Dorsolateral prefrontal cortex (tissue), 120 donors: ENCODE measurements at regions of chr5 and their contacts with region 1.

Region 1: DNA sequence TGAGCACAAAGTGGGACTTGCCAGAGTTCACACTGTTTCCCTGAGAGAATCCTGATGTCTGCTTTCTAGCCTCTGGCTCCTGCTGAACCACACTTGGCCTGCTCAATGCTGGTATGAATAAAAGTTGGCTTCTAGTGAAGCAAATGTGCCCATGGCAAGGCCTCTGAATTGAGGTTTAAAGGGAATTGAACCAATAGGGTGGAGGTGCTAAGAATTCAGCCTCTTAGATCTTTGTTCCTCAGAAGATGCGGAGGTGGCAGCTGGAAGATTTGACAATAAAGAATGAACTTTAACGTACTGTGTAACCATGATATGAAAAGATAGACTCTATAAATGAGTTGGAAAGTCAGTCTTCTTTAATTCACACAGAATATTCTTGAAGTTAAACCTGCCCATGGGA is 57.2 kb downstream of the RASGRF2 start:
- DNase-seq: no peak
- H3K4me3 ChIP-seq: no peak overlapping the region
- H3K27ac ChIP-seq: peak overlapping the region in 24 of 59 donors; percentile 6 to 82 (median 58)
- H3K27me3 ChIP-seq: no peaks in the 10 kb centered on the region
- CTCF ChIP-seq: no peak

Region 2: DNA sequence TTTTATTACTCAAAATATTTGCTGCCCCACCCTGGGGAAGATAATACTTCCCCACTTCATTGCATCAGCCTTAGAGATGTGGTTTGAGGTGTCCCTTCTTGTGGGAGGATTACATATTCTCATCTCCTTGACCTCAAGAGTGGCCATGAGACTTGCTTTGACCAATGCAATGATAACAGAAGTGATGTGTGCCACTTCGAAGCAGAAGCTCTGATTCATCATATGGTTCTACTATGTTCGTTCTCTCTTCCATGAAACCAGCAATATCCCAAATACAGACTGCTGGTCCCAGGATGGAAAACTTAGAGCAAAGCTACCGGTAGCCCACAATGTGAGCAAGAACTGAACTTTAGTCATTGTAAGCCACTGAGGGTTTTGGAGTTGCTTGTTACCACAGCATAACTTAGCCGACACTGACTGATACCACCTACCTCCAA is 890.2 kb before region 1 on chr5:
- intact Hi-C with region 1: no loop called
- DNase-seq: no peak
- H3K4me3 ChIP-seq: no peak overlapping the region
- H3K27ac ChIP-seq: no peak overlapping the region
- H3K27me3 ChIP-seq: no peaks in the 10 kb centered on the region
- CTCF ChIP-seq: no peak

Region 3: DNA sequence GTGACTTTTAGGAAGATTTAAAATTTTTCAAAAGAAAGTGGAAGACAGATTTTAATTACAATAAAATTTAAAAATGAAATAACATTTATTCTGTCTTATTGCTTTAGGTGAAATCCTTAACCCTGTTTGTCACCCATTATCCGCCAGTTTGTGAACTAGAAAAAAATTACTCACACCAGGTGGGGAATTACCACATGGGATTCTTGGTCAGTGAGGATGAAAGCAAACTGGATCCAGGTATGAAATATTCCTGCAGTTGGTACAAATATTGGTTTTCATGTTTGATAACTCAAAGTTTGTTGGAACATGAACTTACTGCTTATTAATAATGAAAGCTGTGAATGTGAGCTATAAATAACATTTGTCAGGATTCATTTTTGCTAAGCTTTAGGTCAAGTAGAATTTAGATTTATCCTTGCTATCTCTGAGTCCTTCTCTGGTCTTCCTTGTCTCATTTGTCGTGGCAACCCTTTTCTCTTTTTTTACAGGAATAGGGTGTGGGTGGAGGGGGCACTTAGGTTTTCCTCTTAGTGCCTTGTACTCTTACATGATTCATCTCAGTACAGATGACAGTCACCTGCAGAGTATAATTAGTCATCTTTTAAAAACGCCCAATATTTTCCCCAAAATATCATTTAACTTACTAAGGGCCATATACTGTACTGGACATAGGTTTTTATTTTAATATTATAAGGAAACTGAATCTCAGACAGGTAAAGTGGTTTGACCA is 152.4 kb before region 1 on chr5:
- intact Hi-C with region 1: no loop called
- DNase-seq: no peak
- H3K4me3 ChIP-seq: no peak overlapping the region
- H3K27ac ChIP-seq: no peak overlapping the region
- H3K27me3 ChIP-seq: no peaks in the 10 kb centered on the region
- CTCF ChIP-seq: no peak

Region 4: DNA sequence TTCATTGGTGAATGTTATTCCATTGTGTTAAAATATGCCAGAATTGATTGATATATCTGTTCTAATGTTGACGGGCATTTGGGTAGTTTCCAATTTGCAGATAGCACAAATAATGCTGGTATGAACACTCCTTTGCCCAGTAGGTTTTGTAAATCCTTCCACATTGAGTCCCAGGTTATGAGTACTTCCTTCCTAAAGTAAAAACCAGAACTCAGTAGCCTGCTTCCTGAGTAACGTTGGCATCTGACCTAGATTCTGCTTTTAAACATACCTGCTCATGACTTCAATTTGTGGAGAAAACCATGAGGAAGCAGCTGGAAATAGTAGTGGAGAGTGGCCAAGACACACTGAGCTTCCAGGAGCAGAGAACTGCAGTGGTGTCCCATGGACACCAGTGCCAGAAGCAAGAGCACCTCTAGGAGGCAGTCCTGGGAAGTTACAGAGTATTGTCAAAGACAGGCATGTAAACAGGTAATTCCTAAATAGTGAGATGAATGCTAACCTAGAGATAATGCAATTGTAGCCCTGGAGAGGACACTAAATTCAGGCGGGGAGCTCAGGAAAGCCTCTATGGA is 81.4 kb before region 1 on chr5:
- intact Hi-C with region 1: no loop called
- DNase-seq: no peak
- H3K4me3 ChIP-seq: no peak overlapping the region
- H3K27ac ChIP-seq: no peak overlapping the region
- H3K27me3 ChIP-seq: no peaks in the 10 kb centered on the region
- CTCF ChIP-seq: no peak

Region 5: DNA sequence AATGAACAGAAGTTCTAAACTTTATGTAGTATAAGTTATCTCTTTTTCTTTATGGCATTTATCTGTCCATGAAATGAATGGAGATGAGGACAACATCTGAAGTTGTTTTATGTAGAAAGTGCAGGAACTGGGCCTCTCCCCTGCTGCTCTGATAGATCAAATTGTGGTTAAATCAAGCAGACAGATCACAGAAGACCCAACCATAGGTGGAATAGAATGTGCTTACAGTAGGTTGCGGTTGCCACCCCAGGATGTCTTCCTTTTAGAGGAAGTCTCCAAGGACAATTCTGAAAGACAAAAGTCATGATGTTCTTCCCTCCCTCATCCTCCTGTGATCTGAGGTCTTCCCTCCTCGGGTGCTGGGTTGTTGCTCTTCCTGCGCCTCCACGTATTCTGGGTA is 44.3 kb before region 1 on chr5:
- intact Hi-C with region 1: loop called in 1 of 2 experiments (anchors 5 kb)
- DNase-seq: no peak
- H3K4me3 ChIP-seq: no peak overlapping the region
- H3K27ac ChIP-seq: peak overlapping the region in 16 of 59 donors; percentile 18 to 84 (median 72)
- H3K27me3 ChIP-seq: no peaks in the 10 kb centered on the region
- CTCF ChIP-seq: no peak

Region 6: DNA sequence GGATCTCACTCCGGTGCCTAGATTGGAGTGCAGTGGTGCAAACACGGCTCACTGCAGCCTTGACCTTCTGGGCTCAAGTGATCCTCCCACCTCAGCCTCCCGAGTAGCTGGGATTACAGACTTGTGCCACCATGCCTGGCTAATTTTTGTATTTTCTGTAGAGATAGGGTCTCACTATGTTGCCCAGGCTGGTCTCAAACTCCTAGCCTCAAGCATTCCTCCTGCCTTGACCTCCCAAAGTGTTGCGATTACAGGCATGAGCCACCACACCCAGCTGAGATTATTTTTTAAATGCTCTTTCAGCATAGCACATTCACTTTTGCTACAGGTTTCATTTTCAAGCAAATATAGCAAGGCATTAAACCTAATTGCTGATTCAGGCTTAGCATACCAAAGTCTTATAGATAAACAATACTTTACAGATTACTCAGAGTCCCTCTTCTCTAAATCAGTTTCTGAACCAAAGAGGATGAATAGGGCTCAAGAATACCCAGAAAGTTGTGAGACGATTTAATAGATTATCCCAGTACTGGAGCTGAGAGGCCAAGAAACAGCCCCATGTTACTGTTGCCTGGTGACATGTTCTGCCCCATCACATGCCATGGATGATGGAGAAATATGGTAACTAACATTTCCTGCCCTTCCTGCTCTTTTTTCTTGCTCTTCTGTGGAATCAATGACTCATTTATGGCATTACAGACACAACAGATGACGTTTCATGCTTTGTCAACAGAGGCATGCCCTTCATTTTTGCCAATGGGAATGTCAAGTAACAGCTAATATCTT is 751.5 kb after region 1 on chr5:
- intact Hi-C with region 1: no loop called
- DNase-seq: no peak
- H3K4me3 ChIP-seq: no peak overlapping the region
- H3K27ac ChIP-seq: no peak overlapping the region
- H3K27me3 ChIP-seq: no peaks in the 10 kb centered on the region
- CTCF ChIP-seq: no peak